HAP-1 (cell line): ENCODE measurements at regions of chr17 and their contacts with region 1.

Region 1: GRCh38 chr17:19433727-19434340 is 22.8 kb downstream of the RNF112 start:
- DNase-seq: no peak
- H3K4me3 ChIP-seq: no peak overlapping the region
- H3K4me1 ChIP-seq: peaks cover 35% of the 10 kb centered on the region
- H3K27me3 ChIP-seq: no peaks in the 10 kb centered on the region

Region 2: GRCh38 chr17:19336938-19337711 is 96.7 kb before region 1 on chr17:
- in situ Hi-C with region 1: no loop called
- DNase-seq: no peak
- H3K4me3 ChIP-seq: no peak overlapping the region
- H3K4me1 ChIP-seq: peaks cover 4% of the 10 kb centered on the region; the same call in 1 of the 2 replicates
- H3K27me3 ChIP-seq: no peaks in the 10 kb centered on the region

Region 3: DNA sequence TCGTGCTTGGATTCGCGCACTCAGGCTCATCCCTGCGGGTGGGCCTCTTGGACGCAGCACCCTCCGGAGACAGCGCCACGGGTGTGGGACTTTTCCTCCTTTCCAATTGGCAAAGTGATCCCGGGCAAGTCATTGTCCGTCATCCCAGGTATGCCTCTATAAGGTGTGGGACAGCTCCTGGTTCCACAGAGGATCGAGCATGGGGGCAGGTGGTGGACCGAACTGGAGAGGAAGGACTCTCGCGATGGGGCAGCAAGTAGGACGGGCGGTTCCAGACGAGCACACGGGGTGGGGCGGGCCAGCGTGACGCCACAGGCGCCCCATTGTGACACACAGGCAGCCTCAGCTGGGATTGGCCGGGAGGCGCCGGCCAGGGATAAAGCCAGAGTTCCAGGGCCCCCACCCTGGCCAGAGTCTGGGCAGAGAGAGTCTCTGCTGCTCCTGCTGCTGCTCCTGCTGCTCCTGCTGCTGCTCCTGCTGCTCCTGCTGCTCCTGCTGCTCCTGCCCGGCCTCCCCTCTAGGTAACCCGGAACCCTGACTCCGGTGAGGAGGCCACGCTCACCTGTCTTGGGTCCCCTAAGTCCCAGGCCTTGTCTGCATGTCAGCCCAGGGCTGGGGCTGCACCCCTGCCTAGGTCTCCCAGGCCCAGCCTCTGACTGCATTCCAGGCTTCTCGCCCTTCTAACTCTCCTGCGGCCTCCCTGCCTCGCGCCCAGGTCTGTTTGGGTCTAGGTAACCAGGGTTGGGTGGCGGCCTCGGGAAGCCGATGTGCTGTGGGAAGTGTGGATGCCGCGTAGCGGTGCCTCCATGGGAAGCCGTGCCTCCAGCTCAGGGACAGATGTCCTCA is 61.4 kb after region 1 on chr17:
- in situ Hi-C with region 1: loop called (anchors 10 kb)
- DNase-seq: no peak
- H3K4me3 ChIP-seq: no peak overlapping the region
- H3K4me1 ChIP-seq: peaks cover 15% of the 10 kb centered on the region
- H3K27me3 ChIP-seq: no peaks in the 10 kb centered on the region